CD8-positive, alpha-beta T cell (primary cell): ENCODE measurements at regions of chr12 and their contacts with region 1.

Region 1: GRCh38 chr12:79444089-79444488 is 246.7 kb downstream of the PAWR start:
- DNase-seq: no peak
- ATAC-seq: no peak
- H3K4me3 ChIP-seq: no peak overlapping the region
- H3K4me3 Mint-ChIP-seq: no peak overlapping the region
- H3K27ac ChIP-seq: no peak overlapping the region
- H3K27ac Mint-ChIP-seq: no peak overlapping the region
- H3K4me1 ChIP-seq: no peaks in the 10 kb centered on the region
- H3K4me1 Mint-ChIP-seq: no peaks in the 10 kb centered on the region
- H3K27me3 ChIP-seq: no peaks in the 10 kb centered on the region
- H3K27me3 Mint-ChIP-seq: no peaks in the 10 kb centered on the region
- CTCF ChIP-seq: no peak

Region 2: GRCh38 chr12:79424109-79424721 is 19.9 kb before region 1 on chr12:
- CTCF ChIA-PET with region 1: no interaction called
- POLR2A ChIA-PET with region 1: no interaction called
- intact Hi-C with region 1: loop called in 1 of 2 experiments (anchors 2 kb)
- DNase-seq: no peak
- ATAC-seq: no peak
- H3K4me3 ChIP-seq: no peak overlapping the region
- H3K4me3 Mint-ChIP-seq: no peak overlapping the region
- H3K27ac ChIP-seq: no peak overlapping the region
- H3K27ac Mint-ChIP-seq: no peak overlapping the region
- H3K4me1 ChIP-seq: no peaks in the 10 kb centered on the region
- H3K4me1 Mint-ChIP-seq: no peaks in the 10 kb centered on the region
- H3K27me3 ChIP-seq: no peaks in the 10 kb centered on the region
- H3K27me3 Mint-ChIP-seq: no peaks in the 10 kb centered on the region
- CTCF ChIP-seq: no peak